RWPE1 (cell line): ENCODE measurements at regions of chr16 and their contacts with region 1.

Region 1: DNA sequence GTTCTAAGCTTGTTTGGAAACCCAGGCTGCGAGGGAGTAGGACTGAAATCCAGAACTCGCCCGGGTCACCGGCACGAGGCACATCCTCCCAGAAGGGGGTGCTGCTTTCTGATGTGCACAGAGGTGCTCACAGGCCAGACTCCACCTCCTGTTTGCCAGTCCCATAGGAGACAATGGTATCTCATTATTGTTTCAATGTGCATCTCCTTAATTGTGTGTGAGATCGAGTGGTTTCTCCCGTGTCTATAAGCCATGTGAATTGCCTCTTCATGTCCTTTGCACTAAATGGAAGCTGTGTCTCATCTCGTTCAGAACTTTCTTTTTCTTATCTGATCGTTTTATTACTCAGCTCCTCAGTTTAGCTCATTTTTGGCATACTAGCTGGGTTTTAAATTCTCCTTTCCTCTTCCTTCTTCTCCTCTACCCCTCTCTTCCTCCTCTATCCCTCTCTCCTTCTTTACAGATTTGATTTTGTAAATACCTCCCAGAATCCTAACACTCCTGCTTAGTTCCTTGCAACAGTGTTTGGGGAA is 32.1 kb upstream of the PRKCB start:
- DNase-seq: peak; percentile 50
- H3K27ac ChIP-seq: no peak overlapping the region
- CTCF ChIP-seq: peak; percentile 31; the same call in 1 of the 2 replicates

Region 2: DNA sequence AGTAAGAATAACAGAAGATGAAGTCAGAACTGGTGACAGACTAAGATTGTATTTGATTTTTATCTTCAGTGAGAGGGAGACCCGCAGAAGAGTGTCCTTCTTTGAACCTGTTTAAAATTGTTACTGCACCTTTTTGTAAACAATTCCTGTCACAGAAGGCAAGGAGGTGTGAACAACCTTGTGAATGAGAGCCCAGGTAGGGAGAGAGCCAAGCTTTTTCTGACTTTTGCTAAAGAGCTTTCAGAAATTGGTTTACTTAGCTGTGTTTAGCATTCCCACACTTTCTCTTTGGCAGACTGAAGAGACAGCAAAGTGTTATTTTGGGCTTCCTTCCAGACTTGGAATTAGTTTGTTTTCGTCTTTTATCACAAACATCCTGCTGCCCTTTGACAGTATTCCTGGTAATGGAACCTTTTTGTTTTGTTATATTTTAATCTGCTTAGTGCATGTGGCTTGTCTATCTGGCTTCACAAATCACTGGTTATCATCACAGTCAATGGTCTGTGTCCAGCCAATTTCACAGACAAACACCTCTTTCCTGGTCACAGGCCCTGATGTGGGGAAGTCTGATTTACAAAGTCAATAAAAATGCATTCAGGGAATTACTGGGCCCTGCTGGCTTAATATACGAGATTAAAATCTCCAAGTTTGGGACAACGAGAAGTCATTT is 1075.4 kb before region 1 on chr16:
- CTCF ChIA-PET with region 1: no interaction called
- POLR2A ChIA-PET with region 1: no interaction called
- DNase-seq: no peak
- H3K27ac ChIP-seq: no peak overlapping the region
- CTCF ChIP-seq: no peak

Region 3: DNA sequence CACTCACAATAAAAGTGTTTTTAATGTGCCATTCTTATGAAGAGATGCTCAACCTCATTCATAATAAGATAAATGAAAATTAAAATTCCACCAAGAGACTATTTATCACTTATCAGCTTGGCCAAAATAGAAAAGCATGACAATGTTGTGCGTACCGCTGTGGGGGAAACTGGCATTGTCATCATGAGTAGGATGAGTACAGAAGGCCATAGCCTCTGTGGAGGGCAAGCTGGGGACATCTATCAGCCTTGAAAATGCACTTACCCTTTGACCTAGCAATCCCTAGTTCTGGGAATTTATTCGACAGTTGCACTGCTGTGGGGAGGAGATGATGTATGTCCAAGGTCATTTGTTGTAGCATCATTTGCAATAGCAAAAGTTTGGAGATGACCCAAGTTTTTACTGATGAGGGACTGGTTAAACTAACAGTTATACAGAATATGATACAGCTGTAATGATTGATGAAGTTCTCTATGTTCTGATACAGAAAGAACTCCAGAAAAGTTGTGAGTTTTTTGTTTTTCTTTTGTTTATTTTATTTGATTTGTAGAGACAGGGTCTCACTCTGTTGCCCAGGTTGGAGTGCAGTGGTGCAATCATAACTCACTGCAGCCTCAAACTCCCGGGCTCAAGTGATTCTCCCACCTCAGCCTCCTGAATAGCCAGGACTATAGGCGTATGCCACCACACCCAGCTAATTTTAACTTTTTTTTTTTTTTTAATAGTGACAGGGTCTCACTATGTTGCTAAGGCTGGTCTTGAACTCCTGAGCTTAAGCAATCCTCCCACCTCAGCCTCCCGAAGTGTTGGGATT is 18.4 kb after region 1 on chr16:
- CTCF ChIA-PET with region 1: no interaction called
- POLR2A ChIA-PET with region 1: no interaction called
- DNase-seq: no peak
- H3K27ac ChIP-seq: no peak overlapping the region
- CTCF ChIP-seq: no peak

Region 4: DNA sequence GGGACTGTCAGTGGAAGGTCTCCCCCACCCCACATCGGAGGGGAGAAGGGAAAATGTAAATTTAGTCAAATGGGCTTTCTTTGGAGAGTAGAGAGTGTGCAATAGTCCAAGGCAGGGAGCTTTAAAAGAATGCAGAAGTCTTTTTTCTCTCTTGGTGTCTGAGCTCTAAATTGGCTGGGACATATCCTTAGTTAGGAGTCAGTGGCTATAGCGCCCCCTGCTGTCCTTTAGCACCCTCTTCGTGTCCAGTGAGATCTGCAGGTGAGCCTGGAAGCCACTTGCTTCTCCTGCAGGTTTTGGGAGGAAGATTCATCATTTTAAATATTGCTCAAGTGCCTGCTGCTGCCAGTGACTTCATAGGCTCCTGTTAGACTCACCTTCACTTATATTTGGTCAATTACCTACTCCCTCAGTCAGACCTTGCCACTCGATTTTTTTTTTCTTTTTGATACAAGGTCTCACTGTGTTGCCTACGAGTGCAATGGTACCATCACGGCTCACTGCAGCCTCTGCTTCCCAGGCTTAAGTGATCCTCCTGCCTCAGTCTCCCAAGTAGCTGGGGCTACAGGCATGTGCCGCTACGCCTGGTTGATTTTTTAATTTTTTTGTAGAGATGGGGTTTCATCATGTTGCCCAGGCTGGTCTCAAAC is 206.9 kb after region 1 on chr16:
- CTCF ChIA-PET with region 1: interaction called, 12 read pairs
- POLR2A ChIA-PET with region 1: no interaction called
- DNase-seq: peak; percentile 40
- H3K27ac ChIP-seq: no peak overlapping the region
- CTCF ChIP-seq: peak; percentile 45